ENCODE measurements at regions of chr5 and their contacts with region 1.

Region 1: GRCh38 chr5:64634997-64635686 is 55.2 kb upstream of the SHISAL2B start:
- DNase-seq: peak in 1 of 2 donors; percentile 59
- H3K4me3 ChIP-seq: no peak overlapping the region
- H3K27ac ChIP-seq: no peak overlapping the region
- H3K4me1 ChIP-seq: no peaks in the 10 kb centered on the region
- H3K27me3 ChIP-seq: peaks cover 0 to 4% (median 0%) of the 10 kb centered on the region in 3 donors
- CTCF ChIP-seq: peak in 5 of 7 experiments; percentile 50 to 77 (median 61)
- EP300 ChIP-seq: no peak
- POLR2A ChIP-seq: no peak

Region 2: DNA sequence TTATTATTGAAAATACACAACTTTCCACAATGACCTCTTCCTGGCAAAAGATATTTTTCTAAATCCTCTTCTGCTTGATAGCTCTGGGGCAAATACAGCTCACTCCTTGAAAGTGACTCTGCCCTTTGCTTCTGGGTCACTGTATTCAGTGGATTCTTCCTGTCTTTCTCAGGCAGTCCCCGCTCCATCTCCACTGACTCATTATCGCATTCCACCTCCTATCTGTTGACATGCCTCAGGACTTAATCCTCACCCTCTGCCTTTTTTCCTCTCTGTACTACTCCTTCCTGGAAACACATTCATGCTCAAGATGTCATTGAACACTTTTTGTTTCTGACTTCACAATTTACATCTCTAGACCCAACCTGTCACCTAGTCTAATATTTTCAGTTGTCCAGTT is 137.8 kb before region 1 on chr5:
- intact Hi-C with region 1: no loop called
- DNase-seq: no peak
- H3K4me3 ChIP-seq: no peak overlapping the region
- H3K27ac ChIP-seq: no peak overlapping the region
- H3K4me1 ChIP-seq: peaks cover 0 to 4% (median 0%) of the 10 kb centered on the region in 4 donors
- H3K27me3 ChIP-seq: no peaks in the 10 kb centered on the region
- CTCF ChIP-seq: no peak
- EP300 ChIP-seq: no peak
- POLR2A ChIP-seq: no peak

Region 3: GRCh38 chr5:64784451-64785025 is 149.4 kb after region 1 on chr5:
- intact Hi-C with region 1: loop called (anchors 5 kb)
- DNase-seq: peak; percentile 78 to 94
- H3K4me3 ChIP-seq: no peak overlapping the region
- H3K27ac ChIP-seq: no peak overlapping the region
- H3K4me1 ChIP-seq: peaks cover 0 to 3% (median 0%) of the 10 kb centered on the region in 4 donors
- H3K27me3 ChIP-seq: no peaks in the 10 kb centered on the region
- CTCF ChIP-seq: peak in 5 of 7 experiments; percentile 42 to 85 (median 72)
- EP300 ChIP-seq: no peak
- POLR2A ChIP-seq: no peak

Measured in stomach (tissue), 19 donors.